ENCODE measurements at regions of chr13 and their contacts with region 1.

Region 1: DNA sequence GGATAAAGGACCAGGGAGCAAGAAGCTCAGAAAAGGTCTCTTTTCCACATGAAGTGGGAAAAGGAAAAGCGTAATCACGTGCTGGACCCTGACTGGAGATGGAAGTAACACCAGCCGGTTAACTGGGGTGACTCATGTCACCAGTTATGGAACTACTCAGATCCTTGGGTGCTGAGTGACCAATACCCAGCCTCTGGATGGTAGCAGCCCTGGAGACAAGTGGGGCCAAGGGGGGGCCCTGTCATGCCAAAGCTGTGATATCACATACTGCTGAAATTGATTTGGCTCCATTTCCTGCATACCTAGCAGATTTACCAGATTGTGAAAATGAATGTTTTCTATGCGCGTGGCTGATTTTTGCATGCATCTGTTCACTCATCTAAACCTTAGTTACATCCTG is 158.9 kb downstream of the ZIC5 start:
- DNase-seq: peak; percentile 4
- H3K4me3 ChIP-seq: no peak overlapping the region
- H3K27me3 ChIP-seq: no peaks in the 10 kb centered on the region
- CTCF ChIP-seq: no peak

Region 2: DNA sequence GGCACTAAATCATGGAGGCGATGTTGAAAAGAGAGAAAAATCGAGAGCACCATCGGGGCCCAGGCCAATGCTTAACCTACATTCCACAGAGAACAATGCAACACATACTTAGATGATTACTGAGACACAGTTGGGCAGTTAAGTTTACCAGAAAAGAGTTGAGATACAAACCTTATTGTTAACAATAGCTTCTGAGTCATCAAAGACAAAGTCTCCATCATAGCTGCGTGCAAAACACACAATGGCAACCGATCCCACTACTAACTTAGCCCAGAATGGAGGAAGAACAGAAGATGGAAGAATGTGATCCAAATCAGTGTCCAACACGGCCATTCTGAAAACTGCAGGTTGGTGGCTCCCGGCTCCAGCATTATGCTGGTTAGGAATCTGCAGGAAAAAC is 855.8 kb after region 1 on chr13:
- CTCF ChIA-PET with region 1: no interaction called
- POLR2A ChIA-PET with region 1: interaction called, 11 read pairs
- DNase-seq: no peak
- H3K4me3 ChIP-seq: no peak overlapping the region
- H3K27me3 ChIP-seq: no peaks in the 10 kb centered on the region
- CTCF ChIP-seq: no peak

Measured in BJ (cell line).